Heart left ventricle (tissue), 16 donors: ENCODE measurements at regions of chr13 and their contacts with region 1.

Region 1: DNA sequence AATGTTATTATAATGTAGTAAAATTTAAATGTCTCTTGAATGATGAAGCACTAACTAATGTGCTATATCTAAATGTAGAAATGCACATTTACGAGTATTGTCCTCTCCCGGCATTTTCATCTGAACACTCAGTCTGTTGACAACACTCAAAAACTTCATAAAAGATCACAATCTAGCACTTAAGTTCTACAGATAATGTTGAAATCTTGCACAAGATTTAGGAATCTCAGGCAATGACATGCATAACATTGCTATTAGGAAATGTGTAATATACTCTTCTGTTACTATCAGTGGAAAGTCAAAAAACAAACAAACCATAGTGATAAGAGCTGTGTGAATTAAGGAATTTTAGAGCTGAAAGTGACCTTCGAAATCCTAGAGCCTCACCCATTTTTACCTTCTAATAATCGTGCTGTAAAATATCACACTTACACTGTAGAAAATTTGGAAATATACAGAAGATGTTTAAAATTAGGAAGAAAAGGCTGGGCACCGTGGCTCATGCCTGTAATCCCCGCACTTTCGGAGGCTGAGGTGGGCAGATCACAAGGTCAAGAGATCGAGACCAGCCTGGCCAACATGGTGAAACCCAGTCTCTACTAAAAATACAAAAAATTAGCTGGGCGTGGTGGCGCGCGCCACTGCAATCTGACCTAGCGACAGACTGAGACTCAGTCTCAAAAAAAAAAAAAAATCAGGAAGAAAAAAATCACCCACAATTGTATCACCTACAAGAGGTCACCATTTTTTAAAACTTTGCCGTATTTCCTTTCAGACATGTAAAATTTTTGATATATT is 37.7 kb upstream of the XPO4 start:
- DNase-seq: no peak
- ATAC-seq: no peak
- H3K4me3 ChIP-seq: no peak overlapping the region
- H3K27ac ChIP-seq: peak overlapping the region in 8 of 12 donors; percentile 22 to 78 (median 44)
- H3K4me1 ChIP-seq: peaks cover 0 to 13% (median 8%) of the 10 kb centered on the region in 12 donors
- H3K27me3 ChIP-seq: peaks cover 0 to 5% (median 0%) of the 10 kb centered on the region in 9 donors
- CTCF ChIP-seq: no peak
- POLR2A ChIP-seq: no peak

Region 2: DNA sequence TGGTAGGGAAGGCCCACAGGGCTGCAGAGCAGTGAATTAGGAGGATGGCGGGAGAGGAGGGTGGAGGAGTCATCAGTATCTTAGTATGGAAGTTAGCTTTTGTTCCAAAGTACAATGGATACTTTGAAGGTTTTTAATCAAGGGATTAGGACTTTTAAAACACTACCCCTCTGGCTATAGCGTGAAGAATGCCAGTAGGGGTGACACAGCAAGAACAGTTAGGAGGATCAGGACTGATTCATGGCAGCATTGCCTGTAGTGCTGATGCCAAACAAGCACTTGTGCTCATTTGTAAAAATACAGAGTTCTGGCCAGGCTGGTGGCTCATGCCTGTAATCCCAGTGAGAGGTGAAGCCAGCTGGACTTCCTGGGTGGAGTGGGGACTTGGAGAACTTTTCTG is 189.8 kb after region 1 on chr13:
- intact Hi-C with region 1: loop called in 8 of 10 experiments (anchors 2 to 10 kb)
- DNase-seq: no peak
- ATAC-seq: no peak
- H3K4me3 ChIP-seq: no peak overlapping the region
- H3K27ac ChIP-seq: no peak overlapping the region
- H3K4me1 ChIP-seq: no peaks in the 10 kb centered on the region
- H3K27me3 ChIP-seq: no peaks in the 10 kb centered on the region
- CTCF ChIP-seq: no peak
- POLR2A ChIP-seq: no peak

Region 3: DNA sequence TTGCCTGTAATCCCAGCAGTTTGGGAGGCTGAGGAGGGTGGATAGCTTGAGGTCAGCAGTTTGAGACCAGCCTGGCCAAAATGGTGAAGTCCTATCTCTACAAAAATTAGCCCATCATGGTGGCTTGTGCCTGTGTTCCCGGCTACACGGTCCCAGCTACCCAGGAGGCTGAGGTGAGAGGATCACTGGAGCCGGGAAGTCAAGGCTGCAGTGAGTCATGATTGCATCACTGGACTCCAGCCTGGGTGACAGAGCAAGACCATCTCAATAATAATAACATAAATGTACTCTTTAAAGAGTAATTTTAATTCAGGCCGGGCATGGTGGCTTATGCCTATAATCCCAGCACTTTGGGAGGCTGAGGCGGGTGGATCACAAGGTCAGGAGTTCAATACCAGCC is 197.4 kb after region 1 on chr13:
- intact Hi-C with region 1: loop called in 9 of 10 experiments (anchors 2 to 10 kb)
- DNase-seq: no peak
- ATAC-seq: no peak
- H3K4me3 ChIP-seq: no peak overlapping the region
- H3K27ac ChIP-seq: no peak overlapping the region
- H3K4me1 ChIP-seq: peaks cover 6 to 22% (median 21%) of the 10 kb centered on the region in 12 donors
- H3K27me3 ChIP-seq: no peaks in the 10 kb centered on the region
- CTCF ChIP-seq: no peak
- POLR2A ChIP-seq: no peak

Region 4: GRCh38 chr13:21176220-21176982 is 236.1 kb after region 1 on chr13 and contains the starts of genes MRPL57 and SKA3:
- intact Hi-C with region 1: loop called in 7 of 10 experiments (anchors 2 to 5 kb)
- DNase-seq: peak; percentile 90 to 96 (median 93)
- ATAC-seq: peak; percentile 98
- H3K4me3 ChIP-seq: peak within 1 kb of the TSS; percentile 74 to 99 (median 85)
- H3K27ac ChIP-seq: peak within 1 kb of the TSS; percentile 94 to 99 (median 96)
- H3K4me1 ChIP-seq: peaks cover 0 to 21% (median 14%) of the 10 kb centered on the region in 12 donors
- H3K27me3 ChIP-seq: no peaks in the 10 kb centered on the region
- CTCF ChIP-seq: peak in 4 of 12 donors; percentile 11 to 35 (median 16)
- POLR2A ChIP-seq: peak in 1 of 2 donors; percentile 95
- total RNA-seq, gene MRPL57: 19.0 to 51.6 (median 22.5) TPM
- total RNA-seq, gene SKA3: 0.33 to 4.5 (median 0.59) TPM in 6 of 9 donors, not detected in the others

Region 5: DNA sequence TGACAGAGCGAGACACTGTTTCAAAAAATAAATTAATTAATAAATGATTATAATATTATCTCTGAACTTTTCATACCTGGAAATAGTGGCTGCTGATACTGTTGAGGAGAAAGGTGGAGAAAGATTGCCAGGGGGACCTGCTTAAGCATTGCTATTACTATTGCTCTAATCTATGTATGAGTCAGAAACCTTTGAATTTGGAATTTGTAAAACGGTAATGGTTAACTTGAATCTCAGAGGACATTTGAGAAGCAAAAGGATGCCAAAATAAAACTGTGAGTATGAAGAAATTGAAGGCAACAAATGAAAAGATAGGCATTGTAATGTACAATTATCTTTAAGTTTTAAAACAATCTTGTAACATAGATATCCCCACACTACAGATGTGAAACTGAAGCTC is 241.4 kb after region 1 on chr13:
- intact Hi-C with region 1: loop called in 8 of 10 experiments (anchors 2 to 5 kb)
- DNase-seq: no peak
- ATAC-seq: no peak
- H3K4me3 ChIP-seq: no peak overlapping the region
- H3K27ac ChIP-seq: no peak overlapping the region
- H3K4me1 ChIP-seq: peaks cover 0 to 15% (median 10%) of the 10 kb centered on the region in 12 donors
- H3K27me3 ChIP-seq: no peaks in the 10 kb centered on the region
- CTCF ChIP-seq: no peak
- POLR2A ChIP-seq: no peak